ENCODE measurements at regions of chr17 and their contacts with region 1.

Region 1: DNA sequence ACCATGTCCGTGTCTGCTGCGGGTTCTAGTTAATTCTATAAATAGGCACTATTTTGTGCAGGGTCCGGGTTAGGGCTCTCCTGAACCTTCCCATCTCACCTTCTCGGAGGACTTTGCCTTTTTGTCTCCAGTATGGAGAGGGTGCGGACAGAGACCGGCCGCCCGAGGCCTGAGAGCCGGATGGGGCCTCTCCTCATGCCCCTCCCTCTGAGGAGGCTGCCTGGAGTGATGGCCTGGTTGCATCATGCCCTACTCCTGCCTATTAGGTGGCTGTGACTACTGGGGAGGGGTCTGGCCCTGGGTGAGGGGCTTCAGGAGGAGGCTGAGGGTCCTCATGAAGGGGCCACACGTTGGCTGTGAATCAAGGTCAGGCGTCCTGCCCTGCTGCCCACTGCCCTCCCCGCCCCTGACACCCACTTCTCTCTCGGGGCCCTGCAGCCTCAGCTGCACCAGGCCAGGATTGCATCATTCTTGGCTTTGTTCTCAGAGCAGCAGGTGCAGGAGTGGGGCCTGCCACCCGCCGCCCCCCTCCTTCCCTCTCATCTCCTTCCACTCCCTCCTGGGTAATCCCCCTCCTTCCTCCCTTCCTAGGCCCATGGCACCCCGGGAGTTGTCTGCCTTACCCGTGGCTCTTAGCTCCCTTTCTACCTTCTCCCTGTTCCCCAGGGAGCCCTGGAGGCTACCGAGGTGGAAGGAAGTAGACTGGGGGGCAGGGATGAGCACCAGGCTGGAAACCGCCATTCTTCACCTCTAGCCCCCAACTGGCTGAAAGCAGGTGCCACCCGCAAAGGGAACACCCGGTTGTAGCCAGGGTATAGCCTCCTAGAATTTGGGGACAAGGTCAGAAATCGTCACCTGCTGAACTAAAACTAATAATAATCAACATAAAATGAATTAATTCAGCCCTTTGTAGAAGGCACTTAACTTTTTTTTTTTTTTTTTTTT is 12.7 kb upstream of the ARHGAP23 start:
- DNase-seq: peak; percentile 59
- ATAC-seq: peak; percentile 73
- H3K4me3 ChIP-seq: peak overlapping the region; percentile 67 to 91 (median 76)
- H3K27ac ChIP-seq: peak overlapping the region; percentile 55
- H3K4me1 ChIP-seq: peaks cover 34% of the 10 kb centered on the region
- H3K27me3 ChIP-seq: peaks cover 16 to 44% of the 10 kb centered on the region in 2 experiments
- CTCF ChIP-seq: 0 out of 2 replicates have a peak, but pooled peaks have one; percentile 1
- EP300 ChIP-seq: peak; percentile 2 to 34; a peak in 1 of 4 replicates
- POLR2A ChIP-seq: peak; percentile 60 to 72; a peak in 2 of 4 replicates
- RAD21 ChIP-seq: no peak

Region 2: DNA sequence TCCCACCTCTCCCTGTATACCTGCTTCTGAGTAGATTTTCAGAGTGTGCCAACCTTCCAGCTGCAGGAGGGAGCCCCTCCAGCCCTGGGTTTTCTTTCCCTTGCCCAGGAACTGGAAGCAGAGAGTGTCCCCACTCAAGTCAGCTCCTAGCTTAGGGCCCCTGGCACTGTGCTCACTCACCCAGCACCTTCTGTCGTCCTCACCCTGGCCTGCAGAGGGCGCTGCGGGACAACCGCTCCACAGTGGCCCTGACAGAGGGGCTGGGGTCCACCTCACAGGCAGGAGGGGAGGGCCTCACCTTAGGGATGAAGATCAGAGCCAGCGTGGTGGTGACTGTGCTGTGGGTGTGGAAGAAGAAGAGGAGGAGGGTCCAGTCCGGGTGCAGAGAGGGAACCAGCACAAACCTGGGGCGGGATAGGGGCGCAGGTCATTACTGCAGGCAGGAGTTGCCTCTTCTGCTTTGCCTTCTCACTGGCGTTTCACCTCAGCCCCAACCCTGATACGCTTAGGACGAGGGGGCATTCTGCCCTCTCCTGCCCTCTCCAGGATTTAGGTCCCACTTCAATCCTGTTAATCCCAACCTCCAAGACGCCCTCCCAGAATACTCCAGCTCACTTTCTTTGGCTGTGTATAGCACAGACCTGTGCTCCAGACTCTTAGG is 81.8 kb before region 1 on chr17:
- CTCF ChIA-PET with region 1: interaction called, 9 read pairs
- POLR2A ChIA-PET with region 1: interaction called, 14 read pairs
- in situ Hi-C with region 1: no loop called
- intact Hi-C with region 1: no loop called
- DNase-seq: peak; percentile 53
- ATAC-seq: peak; percentile 75
- H3K4me3 ChIP-seq: no peak overlapping the region
- H3K27ac ChIP-seq: no peak overlapping the region
- H3K4me1 ChIP-seq: no peaks in the 10 kb centered on the region
- H3K27me3 ChIP-seq: peaks cover 34 to 91% of the 10 kb centered on the region in 2 experiments
- CTCF ChIP-seq: peak; percentile 95
- EP300 ChIP-seq: no peak
- POLR2A ChIP-seq: no peak
- RAD21 ChIP-seq: peak; percentile 68

Region 3: DNA sequence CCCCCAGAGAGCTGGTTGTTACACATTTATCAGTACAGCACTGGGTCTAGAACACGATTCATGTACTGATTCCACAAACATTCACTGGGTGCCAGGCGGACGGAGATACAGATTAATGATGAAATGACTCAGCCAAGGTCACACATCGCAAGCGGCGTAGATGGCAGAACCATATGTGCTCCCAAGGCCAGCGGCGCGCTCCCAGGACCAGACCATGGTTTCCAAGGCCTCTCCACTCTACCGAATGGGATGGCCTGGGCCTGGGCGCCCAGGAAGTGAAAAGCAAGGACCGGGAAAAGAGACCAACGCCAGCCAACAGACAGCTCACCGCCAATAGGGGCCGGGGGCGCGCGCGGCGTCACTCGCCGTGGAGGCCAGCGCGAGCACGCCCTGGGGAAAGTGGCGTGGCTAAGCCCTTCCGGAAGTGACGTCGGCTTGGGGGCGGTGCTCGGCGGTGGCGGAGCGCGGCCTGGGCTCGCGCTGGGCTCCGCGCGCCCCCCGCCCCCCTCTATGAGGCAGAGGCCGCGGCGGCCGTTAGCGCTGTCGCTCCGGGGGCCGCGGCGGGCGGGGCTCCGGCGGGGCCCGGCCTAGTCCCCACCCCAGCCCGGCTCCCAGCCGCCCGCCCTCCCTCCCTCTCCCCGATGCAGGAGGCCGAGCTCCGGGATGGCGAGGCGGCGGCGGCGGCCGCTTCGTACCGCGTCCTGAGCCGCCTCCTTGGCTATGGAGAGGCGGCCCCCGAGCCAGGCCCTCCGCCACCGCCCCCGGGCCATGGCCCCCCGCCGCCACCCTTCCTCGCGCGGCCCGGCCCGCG is 63.9 kb before region 1 on chr17 and contains the start of gene SOCS7:
- CTCF ChIA-PET with region 1: interaction called, 51 read pairs
- POLR2A ChIA-PET with region 1: interaction called, 158 read pairs
- in situ Hi-C with region 1: loop called (anchors 5 kb)
- intact Hi-C with region 1: loop called (anchors 1 kb)
- DNase-seq: peak; percentile 95
- ATAC-seq: peak; percentile 89
- H3K4me3 ChIP-seq: peak within 1 kb of the TSS; percentile 91 to 95 (median 94)
- H3K27ac ChIP-seq: peak within 1 kb of the TSS; percentile 73
- H3K4me1 ChIP-seq: peaks cover 63% of the 10 kb centered on the region
- H3K27me3 ChIP-seq: no peaks in the 10 kb centered on the region; a peak in 1 of 5 replicates
- CTCF ChIP-seq: peak; percentile 39
- EP300 ChIP-seq: peak in 1 of 2 experiments; percentile 45; a peak in 2 of 4 replicates
- POLR2A ChIP-seq: peak; percentile 96 to 97
- RAD21 ChIP-seq: peak; percentile 67
- total RNA-seq, gene SOCS7: 24.0 and 24.2 TPM in 2 replicates

Region 4: DNA sequence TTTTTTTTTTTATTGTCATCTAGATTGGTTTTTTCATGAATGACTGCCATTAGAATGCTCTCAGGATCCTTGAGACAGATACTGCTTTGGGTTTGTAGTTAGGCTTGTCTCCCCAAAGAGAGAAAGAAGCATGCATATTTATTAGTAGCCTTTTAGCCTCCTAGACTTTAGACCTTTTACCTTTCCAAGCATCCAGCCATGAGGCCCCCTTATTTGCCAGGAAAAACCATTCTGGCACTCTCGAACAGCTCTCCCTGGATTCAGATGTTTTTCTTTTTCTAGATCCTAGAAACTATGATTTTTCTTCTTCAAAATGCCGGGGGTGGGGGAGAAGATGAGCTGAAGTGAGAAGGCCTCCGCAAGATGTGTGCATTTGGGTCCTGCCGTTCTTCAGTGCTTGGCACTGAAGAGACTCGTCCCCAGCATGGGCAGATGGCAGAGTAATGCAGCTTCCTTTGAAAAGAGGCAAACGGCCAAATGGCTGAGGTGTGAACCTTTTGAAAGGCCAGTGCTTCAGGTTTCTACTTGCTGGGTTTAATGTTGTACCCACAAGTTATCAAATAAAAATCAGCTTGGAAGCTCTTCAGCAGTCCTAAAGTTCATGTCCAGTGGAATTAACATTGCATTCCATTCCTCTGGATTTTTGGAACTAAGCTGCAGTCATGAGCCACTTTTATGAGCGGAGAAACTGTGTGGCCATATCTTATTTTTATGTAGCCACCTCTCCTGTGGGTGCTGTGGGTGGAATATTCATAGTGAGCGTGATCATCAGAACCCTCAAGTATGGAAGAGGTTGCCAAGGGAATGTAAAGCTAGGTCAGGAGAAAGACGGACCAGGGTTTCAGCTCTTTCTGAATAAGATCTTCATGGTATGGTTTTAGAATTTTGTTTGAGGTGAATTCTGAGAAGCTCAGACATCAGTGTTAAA is 56.7 kb before region 1 on chr17:
- CTCF ChIA-PET with region 1: no interaction called
- POLR2A ChIA-PET with region 1: interaction called, 158 read pairs
- in situ Hi-C with region 1: no loop called
- intact Hi-C with region 1: no loop called
- DNase-seq: peak; percentile 34
- ATAC-seq: peak; percentile 62
- H3K4me3 ChIP-seq: peak overlapping the region; percentile 2 to 36 (median 26); a peak in 5 of 6 replicates
- H3K27ac ChIP-seq: peak overlapping the region; percentile 63
- H3K4me1 ChIP-seq: peaks cover 62% of the 10 kb centered on the region
- H3K27me3 ChIP-seq: no peaks in the 10 kb centered on the region
- CTCF ChIP-seq: no peak
- EP300 ChIP-seq: no peak
- POLR2A ChIP-seq: no peak
- RAD21 ChIP-seq: no peak

Measured in HepG2 (cell line).